ENCODE measurements at regions of chr1 and their contacts with region 1.

Region 1: GRCh38 chr1:222792744-222793143 is 22.1 kb upstream of the DISP1 start:
- DNase-seq: peak in 3 of 4 experiments; percentile 16 to 38 (median 29)
- ATAC-seq: peak; percentile 42; the same call in 1 of the 3 replicates
- H3K4me3 ChIP-seq: no peak overlapping the region
- H3K27ac ChIP-seq: no peak overlapping the region
- H3K4me1 ChIP-seq: no peaks in the 10 kb centered on the region
- H3K27me3 ChIP-seq: 0 out of 5 replicates have a peak, but pooled peaks cover 0 to 5% of the 10 kb centered on the region in 2 experiments
- CTCF ChIP-seq: peak in 2 of 3 experiments; percentile 33 to 64; a peak in 4 of 6 replicates
- EP300 ChIP-seq: no peak
- POLR2A ChIP-seq: no peak
- RAD21 ChIP-seq: peak; percentile 79 to 82

Region 2: DNA sequence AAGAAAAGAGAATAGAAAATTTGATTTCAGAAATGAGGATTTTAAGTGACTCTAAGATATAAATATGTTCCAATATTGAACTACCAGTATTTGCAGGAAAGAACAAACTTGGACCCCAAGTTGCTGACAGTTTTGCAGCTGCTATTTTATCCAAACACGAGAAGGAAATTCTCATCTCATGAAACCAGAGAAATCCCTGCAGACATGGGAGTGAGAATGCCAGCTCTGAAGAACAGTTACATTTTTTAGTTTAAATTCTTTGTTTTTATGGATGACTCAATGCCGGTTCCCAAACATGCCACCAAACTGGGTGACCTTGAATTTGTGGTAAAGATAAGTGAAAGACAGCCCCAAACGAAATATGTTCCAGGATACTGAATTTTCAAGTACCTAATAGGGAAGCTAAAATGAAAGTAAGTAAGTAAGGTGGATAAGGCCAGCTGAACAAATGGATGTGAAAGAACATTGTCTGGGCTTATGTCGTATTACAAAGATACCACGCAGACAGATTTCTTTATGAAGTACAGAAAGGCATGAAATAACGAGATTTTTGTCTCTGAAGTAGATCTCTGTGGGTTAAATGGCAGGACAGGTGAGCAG is 330.4 kb after region 1 on chr1:
- CTCF ChIA-PET with region 1: interaction called, 3 read pairs
- POLR2A ChIA-PET with region 1: no interaction called
- in situ Hi-C with region 1: no loop called
- intact Hi-C with region 1: loop called (anchors 2 kb)
- DNase-seq: no peak
- ATAC-seq: no peak
- H3K4me3 ChIP-seq: no peak overlapping the region
- H3K27ac ChIP-seq: no peak overlapping the region
- H3K4me1 ChIP-seq: no peaks in the 10 kb centered on the region
- H3K27me3 ChIP-seq: no peaks in the 10 kb centered on the region
- CTCF ChIP-seq: no peak
- EP300 ChIP-seq: no peak
- POLR2A ChIP-seq: no peak
- RAD21 ChIP-seq: no peak

Region 3: DNA sequence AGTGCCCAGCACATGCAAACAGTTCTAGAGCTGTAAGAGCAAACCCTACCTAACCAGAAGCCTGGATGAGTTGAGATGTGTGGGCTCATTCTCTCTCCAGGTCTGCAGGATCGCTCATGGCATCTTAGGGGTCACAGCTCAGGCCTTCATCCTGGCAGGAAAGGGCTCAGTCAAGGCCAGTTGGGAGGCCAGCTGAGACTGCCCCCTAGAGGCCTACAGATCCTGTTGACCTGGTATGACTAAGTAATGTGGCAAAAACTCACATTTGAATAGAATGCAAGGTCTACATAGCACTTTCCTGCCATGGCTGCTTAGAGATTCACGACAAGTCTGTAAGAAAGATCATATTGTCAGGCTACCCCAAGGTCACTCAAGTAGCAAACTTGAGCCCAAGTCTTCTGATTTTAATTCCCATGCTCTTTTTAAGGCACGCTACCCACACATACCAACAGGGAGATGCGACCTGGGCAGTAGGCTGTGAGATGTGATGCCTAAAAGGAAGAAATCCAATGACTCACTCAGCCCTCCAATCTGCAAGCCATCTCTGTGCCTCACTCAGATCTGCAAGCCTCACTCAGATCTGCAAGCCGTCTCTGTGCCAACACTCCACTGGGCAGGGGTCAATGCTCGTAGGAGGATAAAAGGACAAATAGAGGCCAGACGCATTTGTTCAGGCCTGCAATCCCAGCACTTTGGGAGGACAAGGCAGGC is 877.9 kb after region 1 on chr1:
- CTCF ChIA-PET with region 1: no interaction called
- POLR2A ChIA-PET with region 1: no interaction called
- in situ Hi-C with region 1: loop called (anchors 25 kb)
- intact Hi-C with region 1: no loop called
- DNase-seq: peak; percentile 62 to 67 (median 65)
- ATAC-seq: peak; percentile 97
- H3K4me3 ChIP-seq: no peak overlapping the region
- H3K27ac ChIP-seq: no peak overlapping the region
- H3K4me1 ChIP-seq: no peaks in the 10 kb centered on the region
- H3K27me3 ChIP-seq: peaks cover 0 to 31% of the 10 kb centered on the region in 2 experiments; a peak in 3 of 5 replicates
- CTCF ChIP-seq: peak; percentile 77 to 85 (median 80)
- EP300 ChIP-seq: no peak
- POLR2A ChIP-seq: no peak
- RAD21 ChIP-seq: peak; percentile 39 to 74

Measured in K562 (cell line).